ENCODE measurements at regions of chr17 and their contacts with region 1.

Region 1: DNA sequence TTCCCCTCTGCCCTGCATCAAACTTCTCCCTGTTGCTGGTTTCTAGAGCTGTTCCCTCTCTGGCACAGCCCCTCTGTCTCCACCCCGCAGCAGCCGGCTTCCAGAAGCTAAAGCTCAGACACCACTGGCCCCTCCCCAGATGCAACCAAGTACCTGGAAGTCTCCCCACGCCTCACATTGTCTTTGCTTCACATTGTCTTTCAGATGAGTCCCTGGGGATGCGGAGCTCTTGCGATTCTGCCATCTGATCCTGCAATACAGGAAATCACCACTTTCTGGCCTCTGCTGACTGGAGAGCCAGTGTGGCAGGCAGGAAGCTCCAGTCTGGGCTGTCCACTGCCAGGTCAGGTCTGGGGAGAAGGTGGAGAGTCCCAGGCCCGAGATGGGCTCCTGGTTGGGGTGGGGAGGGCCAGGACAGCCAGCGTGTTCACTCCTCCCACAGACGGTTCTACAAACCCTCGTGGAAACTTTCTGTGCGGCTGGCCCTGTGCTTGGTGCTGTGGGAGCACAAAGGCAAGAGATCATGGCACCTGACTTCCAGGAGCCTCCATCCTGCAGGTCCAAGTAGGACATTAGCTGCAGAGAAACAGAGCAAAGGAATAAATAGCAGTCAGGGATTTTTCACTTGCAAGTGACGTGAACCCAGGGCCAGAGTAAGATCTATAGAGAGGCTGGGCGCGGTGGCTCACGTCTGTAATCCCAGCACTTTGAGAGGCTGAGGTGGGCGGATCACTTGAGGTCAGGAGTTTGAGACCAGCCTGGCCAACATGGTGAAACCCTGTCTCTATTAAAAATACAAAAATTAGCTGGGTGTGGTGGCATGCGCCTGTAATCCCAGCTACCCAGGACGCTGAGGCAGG is 47.9 kb upstream of the MAP3K14 start:
- DNase-seq: peak in 1 of 3 donors; percentile 24
- ATAC-seq: peak; percentile 10 to 63
- H3K4me3 ChIP-seq: no peak overlapping the region
- H3K27ac ChIP-seq: no peak overlapping the region
- H3K4me1 ChIP-seq: no peaks in the 10 kb centered on the region
- H3K27me3 ChIP-seq: no peaks in the 10 kb centered on the region

Region 2: DNA sequence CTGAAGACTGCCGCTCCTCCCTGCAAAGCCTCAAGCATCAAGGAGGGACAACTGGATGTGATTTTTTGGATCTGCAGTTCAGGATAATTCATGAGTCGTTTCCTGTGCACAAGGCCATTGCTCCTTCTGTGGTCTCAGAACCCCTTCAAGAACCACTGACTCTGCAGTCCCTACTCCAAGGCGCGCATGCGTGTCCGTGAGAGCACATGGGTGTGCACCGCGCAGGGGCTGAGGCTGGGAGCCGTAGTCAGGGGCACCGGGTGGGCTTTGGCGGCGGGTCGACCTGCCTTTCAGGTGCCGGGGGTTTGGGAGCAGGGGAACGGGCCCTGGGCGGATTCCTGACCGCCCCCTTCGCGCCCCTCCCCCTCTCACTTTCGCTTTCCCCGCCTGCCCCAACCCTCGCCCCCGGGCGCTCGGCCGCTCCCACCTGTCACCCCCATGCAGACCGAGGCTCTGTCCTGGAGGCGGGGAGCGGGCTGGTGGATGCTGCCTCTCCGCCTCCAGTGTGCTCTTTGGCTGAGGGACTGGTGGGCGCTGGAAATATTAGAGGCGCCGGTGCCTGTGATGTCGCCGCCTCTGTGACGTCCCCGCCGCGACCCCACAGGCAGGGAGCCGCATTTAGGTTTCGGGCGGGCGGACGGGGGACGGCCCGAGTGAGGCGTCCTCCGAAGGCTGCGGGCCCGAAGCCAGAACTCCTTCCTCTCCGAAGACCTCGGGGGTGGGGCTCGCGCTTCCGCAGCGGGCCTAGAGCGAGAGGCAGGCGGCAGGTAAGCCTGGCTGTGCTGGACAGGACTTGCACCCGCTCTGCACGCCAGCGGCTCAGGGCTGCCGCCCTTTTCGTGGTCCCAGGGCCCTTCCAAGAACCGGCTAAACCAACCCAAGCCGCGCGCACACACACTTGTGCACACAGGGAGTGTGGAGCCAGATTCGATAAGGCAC is 102.9 kb before region 1 on chr17 and contains the start of gene SPATA32:
- intact Hi-C with region 1: no loop called
- DNase-seq: peak; percentile 68 to 88 (median 86)
- ATAC-seq: peak; percentile 51 to 57
- H3K4me3 ChIP-seq: peak within 1 kb of the TSS; percentile 61
- H3K27ac ChIP-seq: no peak within 1 kb of the TSS
- H3K4me1 ChIP-seq: peaks cover 8% of the 10 kb centered on the region
- H3K27me3 ChIP-seq: no peaks in the 10 kb centered on the region
- total RNA-seq, gene SPATA32: not detected

Region 3: DNA sequence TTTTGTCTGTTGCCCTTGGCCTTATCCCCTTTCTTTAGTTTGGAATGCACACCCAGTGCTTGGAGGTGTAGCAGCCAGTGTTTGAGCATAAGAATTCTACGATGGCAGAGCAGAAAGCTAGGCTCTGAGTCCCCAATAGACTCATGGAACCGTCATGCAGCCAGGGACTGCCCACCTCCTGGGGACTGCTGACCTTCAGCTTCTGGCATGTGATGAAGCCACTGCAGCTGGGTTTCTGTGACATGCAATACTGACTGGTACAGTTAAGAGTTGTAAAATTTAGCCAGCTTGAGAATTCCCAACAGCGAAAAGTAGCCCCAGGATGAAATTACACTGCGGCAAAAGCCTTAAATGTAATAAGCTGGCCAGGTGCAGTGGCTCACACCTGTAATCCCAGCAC is 39.0 kb before region 1 on chr17:
- intact Hi-C with region 1: loop called in 1 of 4 experiments (anchors 5 kb)
- DNase-seq: no peak
- ATAC-seq: no peak
- H3K4me3 ChIP-seq: no peak overlapping the region
- H3K27ac ChIP-seq: no peak overlapping the region
- H3K4me1 ChIP-seq: no peaks in the 10 kb centered on the region
- H3K27me3 ChIP-seq: no peaks in the 10 kb centered on the region

Region 4: GRCh38 chr17:45341533-45342158 is 23.1 kb before region 1 on chr17:
- intact Hi-C with region 1: loop called in 1 of 4 experiments (anchors 2 kb)
- DNase-seq: peak; percentile 85 to 93 (median 85)
- ATAC-seq: peak; percentile 64 to 83
- H3K4me3 ChIP-seq: no peak overlapping the region
- H3K27ac ChIP-seq: peak overlapping the region; percentile 45
- H3K4me1 ChIP-seq: peaks cover 6% of the 10 kb centered on the region
- H3K27me3 ChIP-seq: no peaks in the 10 kb centered on the region

Region 5: DNA sequence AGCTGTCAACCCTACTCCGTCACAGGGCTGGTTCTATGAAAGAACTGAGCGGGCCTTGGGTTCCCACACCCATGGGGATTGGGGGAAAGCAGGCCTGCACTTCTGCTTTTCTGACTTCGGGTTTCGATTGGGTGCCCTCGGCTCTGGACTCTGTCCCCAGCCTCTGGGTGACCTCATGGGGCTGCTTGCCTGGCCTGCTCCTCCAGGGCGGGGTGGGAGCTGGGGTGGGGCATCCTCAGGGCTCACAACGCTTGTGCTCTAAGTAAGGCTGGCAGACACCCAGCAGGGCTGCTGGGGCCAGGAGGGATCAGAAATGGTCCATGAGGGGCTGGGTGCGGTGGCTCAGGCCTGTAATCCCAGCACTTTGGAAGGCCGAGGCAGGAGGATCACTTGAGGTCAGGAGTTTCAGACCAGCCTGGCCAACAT is 48.8 kb after region 1 on chr17:
- intact Hi-C with region 1: no loop called
- DNase-seq: peak; percentile 60 to 88 (median 83)
- ATAC-seq: peak; percentile 44 to 49
- H3K4me3 ChIP-seq: no peak overlapping the region
- H3K27ac ChIP-seq: no peak overlapping the region
- H3K4me1 ChIP-seq: peaks cover 22% of the 10 kb centered on the region
- H3K27me3 ChIP-seq: no peaks in the 10 kb centered on the region

Measured in right cardiac atrium (tissue), 5 donors.